Posterior vena cava (tissue), 2 donors: ENCODE measurements at regions of chr17 and their contacts with region 1.

Region 1: GRCh38 chr17:49223517-49224197 is 6.9 kb downstream of the PHOSPHO1 start:
- DNase-seq: peak; percentile 87

Region 2: DNA sequence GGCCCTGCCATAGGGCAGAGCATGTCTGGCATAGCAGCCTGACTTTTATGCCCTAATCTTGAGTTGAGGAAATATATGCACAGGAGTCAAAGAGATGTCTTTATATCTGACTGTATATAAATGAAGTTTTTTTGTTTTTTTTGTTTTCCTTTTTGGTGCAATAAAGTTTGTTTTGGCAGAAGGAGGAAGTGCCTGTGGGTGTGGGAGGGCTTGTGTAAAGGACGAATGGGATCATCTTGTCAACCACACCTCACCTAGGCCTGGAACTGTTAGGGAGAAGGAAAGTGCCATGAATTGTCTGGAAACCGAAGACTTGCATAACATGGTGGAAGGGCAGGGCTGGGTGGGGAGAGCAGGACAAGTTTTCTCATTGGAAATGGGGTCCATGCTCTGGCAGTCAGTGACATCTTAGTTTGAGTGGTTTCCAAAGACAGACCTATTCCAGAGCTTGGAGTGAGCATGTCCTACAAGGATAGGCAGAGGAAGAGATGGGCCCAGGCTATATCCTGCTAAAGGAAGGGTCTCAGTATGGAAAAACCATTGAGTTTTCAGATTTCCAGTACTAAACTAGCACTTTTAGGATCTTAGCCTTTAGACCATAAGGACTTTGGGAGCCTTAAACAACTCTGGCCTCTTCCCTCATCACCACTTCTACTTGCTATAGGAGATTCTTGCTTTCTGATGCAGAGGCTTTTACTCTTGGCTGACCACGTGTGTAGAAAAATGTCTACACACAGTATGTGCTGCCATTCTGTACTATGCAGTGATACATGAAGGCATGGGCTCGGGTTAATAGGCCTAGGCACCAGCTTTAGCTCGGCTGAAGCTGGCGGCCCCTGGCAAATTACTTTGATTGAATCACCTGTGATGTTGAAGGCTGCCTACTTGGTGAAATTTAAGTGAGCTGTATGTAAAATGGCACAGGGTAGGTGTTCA is 294.5 kb before region 1 on chr17:
- intact Hi-C with region 1: no loop called
- DNase-seq: no peak

Region 3: GRCh38 chr17:49290690-49291359 is 67.2 kb after region 1 on chr17:
- intact Hi-C with region 1: loop called in 1 of 2 experiments (anchors 2 kb)
- DNase-seq: no peak